ENCODE measurements at regions of chr5 and their contacts with region 1.

Region 1: GRCh38 chr5:168347071-168347767 is 55.8 kb downstream of the WWC1 start:
- DNase-seq: no peak
- H3K4me3 ChIP-seq: no peak overlapping the region
- H3K27ac ChIP-seq: no peak overlapping the region
- H3K4me1 ChIP-seq: no peaks in the 10 kb centered on the region
- H3K27me3 ChIP-seq: no peaks in the 10 kb centered on the region
- CTCF ChIP-seq: no peak

Region 2: DNA sequence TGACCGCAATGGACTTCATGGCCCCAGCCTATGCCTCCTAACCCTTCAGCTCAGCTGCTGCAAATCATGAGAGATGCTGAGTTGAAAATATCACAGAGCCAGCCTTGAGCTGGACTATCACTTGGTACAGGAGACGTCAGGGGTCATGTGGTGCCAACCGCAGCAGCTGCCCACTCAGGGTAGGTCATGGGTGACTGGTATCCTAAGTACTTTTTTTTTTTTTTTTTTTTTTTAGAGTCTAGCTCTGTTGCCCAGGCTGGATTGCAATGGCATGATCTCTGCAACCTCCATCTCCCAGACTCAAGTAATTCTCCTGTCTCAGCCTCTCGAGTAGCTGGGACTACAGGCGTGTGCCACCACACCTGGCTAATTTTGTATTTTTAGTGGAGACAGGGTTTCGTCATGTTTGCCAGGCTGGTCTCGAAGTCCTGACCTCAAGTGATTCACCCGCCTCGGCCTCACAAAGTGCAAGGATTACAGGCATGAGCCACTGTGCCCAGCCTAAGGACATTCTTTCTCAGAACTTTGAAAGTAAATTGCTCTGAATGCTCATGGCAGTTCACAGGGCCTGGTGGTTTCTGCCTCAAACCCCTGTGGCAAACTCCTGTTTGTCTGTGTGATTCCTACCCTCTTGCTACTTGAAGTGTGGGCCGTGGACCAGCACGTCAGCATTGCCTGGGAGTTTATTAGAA is 34.5 kb before region 1 on chr5:
- CTCF ChIA-PET with region 1: no interaction called
- POLR2A ChIA-PET with region 1: interaction called, 17 read pairs
- intact Hi-C with region 1: no loop called
- DNase-seq: no peak
- H3K4me3 ChIP-seq: no peak overlapping the region
- H3K27ac ChIP-seq: no peak overlapping the region
- H3K4me1 ChIP-seq: no peaks in the 10 kb centered on the region
- H3K27me3 ChIP-seq: no peaks in the 10 kb centered on the region
- CTCF ChIP-seq: no peak

Region 3: GRCh38 chr5:168409580-168410458 is 62.6 kb after region 1 on chr5:
- CTCF ChIA-PET with region 1: no interaction called
- POLR2A ChIA-PET with region 1: no interaction called
- intact Hi-C with region 1: no loop called
- DNase-seq: peak; percentile 50
- H3K4me3 ChIP-seq: no peak overlapping the region
- H3K27ac ChIP-seq: no peak overlapping the region
- H3K4me1 ChIP-seq: no peaks in the 10 kb centered on the region
- H3K27me3 ChIP-seq: no peaks in the 10 kb centered on the region
- CTCF ChIP-seq: no peak